ENCODE measurements at regions of chrX and their contacts with region 1.

Region 1: DNA sequence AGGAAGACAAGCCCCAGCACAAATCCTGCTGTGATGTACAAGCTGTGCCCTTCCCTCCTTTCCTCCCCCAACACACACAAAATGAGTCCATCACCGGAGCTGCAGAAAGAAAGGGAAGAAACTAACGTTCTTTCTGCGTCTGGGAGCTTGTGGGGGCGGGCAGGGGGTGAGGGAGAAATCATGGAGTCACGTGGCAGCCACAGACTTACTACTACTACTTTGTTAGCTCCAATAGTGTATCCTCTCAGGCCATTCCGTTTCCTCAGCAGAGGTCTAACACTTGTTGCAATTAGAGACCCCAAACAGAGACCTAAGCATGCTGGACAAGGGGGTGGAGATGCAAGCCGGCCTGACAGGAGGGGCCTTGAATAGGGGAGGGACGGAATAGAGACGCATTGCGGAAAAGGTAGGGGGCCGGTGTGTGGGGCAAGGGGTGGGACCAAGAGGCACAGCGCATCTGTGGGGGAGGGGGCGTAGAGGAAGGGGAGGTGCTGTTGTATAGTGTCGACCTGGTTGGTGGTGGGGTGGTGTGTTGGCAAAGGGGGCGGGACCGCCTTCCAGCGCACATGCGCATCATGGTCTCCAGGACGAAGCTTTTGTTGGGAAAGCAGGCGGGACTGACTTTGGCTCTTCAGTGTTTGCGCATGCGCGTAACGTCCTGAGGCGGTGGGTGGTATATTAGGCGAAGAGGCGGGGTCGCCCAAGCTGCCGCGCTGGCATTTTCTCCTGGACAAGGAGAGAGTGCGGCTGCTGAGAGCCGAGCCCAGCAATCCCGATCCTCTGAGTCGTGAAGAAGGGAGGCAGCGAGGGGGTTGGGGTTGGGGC is at the start of gene MAGED1:
- DNase-seq: peak; percentile 79 to 98
- H3K4me3 ChIP-seq: peak within 1 kb of the TSS; percentile 64
- H3K27ac ChIP-seq: no peak within 1 kb of the TSS
- H3K4me1 ChIP-seq: no peaks in the 10 kb centered on the region
- H3K27me3 ChIP-seq: no peaks in the 10 kb centered on the region
- CTCF ChIP-seq: no peak
- total RNA-seq, gene MAGED1: 118 and 143 TPM in 2 replicates

Region 2: GRCh38 chrX:51459125-51459524 is 434.0 kb before region 1 on chrX:
- CTCF ChIA-PET with region 1: no interaction called
- POLR2A ChIA-PET with region 1: no interaction called
- intact Hi-C with region 1: no loop called
- DNase-seq: no peak
- H3K4me3 ChIP-seq: no peak overlapping the region
- H3K27ac ChIP-seq: no peak overlapping the region
- H3K4me1 ChIP-seq: no peaks in the 10 kb centered on the region
- H3K27me3 ChIP-seq: no peaks in the 10 kb centered on the region
- CTCF ChIP-seq: peak; percentile 48

Region 3: GRCh38 chrX:51813886-51814460 is 79.2 kb before region 1 on chrX:
- CTCF ChIA-PET with region 1: no interaction called
- POLR2A ChIA-PET with region 1: no interaction called
- intact Hi-C with region 1: loop called (anchors 10 kb)
- DNase-seq: no peak
- H3K4me3 ChIP-seq: no peak overlapping the region
- H3K27ac ChIP-seq: no peak overlapping the region
- H3K4me1 ChIP-seq: no peaks in the 10 kb centered on the region
- H3K27me3 ChIP-seq: no peaks in the 10 kb centered on the region
- CTCF ChIP-seq: no peak